ENCODE measurements at regions of chrX and their contacts with region 1.

Region 1: GRCh38 chrX:149962859-149963757 is 24.8 kb upstream of the EOLA2 start:
- DNase-seq: peak; percentile 80
- H3K4me3 ChIP-seq: no peak overlapping the region
- H3K27ac ChIP-seq: no peak overlapping the region
- H3K4me1 ChIP-seq: 0 out of 2 replicates have a peak, but pooled peaks cover 4% of the 10 kb centered on the region
- H3K27me3 ChIP-seq: no peaks in the 10 kb centered on the region

Region 2: DNA sequence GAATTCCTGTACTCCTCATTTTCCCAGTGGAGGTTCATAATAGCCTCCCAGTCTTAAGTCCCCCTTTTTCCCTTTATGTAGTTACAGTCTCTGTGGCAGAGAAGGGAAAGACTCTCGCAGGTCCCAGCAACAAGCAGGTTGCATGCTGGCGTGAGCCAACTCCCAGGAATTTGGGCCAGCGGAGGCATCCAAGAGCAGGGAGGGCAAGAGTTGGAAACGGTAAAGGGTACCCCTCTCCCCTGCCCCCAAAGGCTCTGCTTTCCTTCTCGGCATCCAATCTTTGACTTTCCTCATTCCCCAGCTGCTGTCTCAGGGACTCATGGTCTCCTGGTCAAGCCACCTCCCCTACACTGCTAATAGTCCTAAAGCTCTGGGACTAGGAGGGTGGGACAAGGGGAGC is 352.6 kb before region 1 on chrX:
- in situ Hi-C with region 1: no loop called
- DNase-seq: no peak
- H3K4me3 ChIP-seq: no peak overlapping the region
- H3K27ac ChIP-seq: no peak overlapping the region
- H3K4me1 ChIP-seq: no peaks in the 10 kb centered on the region
- H3K27me3 ChIP-seq: no peaks in the 10 kb centered on the region

Region 3: GRCh38 chrX:149715468-149715867 is 247.6 kb before region 1 on chrX:
- in situ Hi-C with region 1: no loop called
- DNase-seq: no peak
- H3K4me3 ChIP-seq: no peak overlapping the region
- H3K27ac ChIP-seq: no peak overlapping the region
- H3K4me1 ChIP-seq: no peaks in the 10 kb centered on the region
- H3K27me3 ChIP-seq: no peaks in the 10 kb centered on the region

Region 4: DNA sequence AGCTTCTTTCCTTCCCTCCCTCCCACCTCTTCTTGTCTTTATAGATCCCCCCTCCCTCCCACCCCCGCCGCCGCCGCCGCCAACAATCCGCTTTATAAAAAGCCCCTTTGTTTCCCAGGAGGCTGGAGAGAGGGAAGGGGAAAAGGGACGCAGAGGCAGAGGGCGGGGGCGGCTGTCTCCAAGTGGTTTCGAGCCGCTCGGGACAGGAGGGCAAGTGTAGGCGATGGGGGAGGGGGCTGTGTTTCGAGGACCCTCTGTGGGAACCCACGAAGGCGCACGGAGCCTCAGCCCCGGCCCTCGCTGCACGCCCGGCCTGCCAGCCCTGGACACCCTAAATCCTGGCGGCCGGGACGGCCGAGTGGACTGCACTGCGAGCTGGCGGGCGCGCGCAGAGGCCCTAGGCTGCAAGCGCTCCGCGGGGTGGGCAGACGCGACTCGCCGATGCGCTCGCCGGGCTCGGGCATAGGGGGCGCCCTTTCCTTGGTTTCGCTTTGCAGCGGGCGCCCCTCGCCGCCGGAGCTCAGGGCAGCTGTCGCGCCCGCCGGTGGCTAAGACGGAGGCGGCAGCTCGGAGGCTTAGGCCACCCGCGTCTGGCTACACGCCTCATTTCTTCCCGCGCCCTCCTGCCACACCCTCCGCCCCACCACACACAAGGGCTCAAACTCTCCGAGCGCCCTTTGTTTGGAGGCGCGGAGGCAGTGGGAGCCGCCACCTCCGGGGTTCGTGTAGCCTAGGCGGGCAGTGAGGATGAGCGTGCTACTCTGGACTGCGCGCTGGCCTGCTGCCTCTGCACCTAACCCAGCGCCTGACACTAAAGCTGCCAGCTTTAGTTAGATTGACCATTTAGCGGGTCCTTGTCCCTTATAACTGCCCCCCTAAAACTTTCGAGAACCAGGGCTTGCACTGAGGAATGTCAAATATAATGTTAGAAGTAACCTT is 402.2 kb after region 1 on chrX:
- in situ Hi-C with region 1: loop called (anchors 25 kb)
- DNase-seq: peak; percentile 77
- H3K4me3 ChIP-seq: peak overlapping the region; percentile 89
- H3K27ac ChIP-seq: peak overlapping the region; percentile 90
- H3K4me1 ChIP-seq: no peaks in the 10 kb centered on the region; the same call in 1 of the 2 replicates
- H3K27me3 ChIP-seq: no peaks in the 10 kb centered on the region

Region 5: DNA sequence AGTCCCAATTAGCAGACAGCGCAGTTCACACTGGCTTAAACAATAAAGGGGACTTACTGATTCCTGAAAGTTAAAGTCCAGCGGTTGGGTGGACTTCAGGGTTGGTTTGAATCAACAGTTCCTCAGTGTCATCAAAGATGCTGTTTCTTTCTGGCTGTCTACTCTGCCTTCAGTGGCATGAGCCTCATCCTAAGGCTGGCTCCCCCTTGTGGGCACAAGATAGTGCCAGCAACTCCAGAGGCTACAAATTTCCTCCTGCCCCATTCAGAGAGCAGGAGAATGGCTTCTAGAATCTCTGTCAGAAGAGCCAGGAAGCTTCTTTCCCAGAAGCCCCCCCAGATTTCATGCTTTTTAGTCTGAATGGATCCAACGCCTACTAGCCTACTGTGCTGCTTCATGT is 522.9 kb after region 1 on chrX:
- in situ Hi-C with region 1: loop called (anchors 25 kb)
- DNase-seq: peak; percentile 74
- H3K4me3 ChIP-seq: no peak overlapping the region
- H3K27ac ChIP-seq: no peak overlapping the region
- H3K4me1 ChIP-seq: peaks cover 8% of the 10 kb centered on the region; the same call in 1 of the 2 replicates
- H3K27me3 ChIP-seq: no peaks in the 10 kb centered on the region

Region 6: DNA sequence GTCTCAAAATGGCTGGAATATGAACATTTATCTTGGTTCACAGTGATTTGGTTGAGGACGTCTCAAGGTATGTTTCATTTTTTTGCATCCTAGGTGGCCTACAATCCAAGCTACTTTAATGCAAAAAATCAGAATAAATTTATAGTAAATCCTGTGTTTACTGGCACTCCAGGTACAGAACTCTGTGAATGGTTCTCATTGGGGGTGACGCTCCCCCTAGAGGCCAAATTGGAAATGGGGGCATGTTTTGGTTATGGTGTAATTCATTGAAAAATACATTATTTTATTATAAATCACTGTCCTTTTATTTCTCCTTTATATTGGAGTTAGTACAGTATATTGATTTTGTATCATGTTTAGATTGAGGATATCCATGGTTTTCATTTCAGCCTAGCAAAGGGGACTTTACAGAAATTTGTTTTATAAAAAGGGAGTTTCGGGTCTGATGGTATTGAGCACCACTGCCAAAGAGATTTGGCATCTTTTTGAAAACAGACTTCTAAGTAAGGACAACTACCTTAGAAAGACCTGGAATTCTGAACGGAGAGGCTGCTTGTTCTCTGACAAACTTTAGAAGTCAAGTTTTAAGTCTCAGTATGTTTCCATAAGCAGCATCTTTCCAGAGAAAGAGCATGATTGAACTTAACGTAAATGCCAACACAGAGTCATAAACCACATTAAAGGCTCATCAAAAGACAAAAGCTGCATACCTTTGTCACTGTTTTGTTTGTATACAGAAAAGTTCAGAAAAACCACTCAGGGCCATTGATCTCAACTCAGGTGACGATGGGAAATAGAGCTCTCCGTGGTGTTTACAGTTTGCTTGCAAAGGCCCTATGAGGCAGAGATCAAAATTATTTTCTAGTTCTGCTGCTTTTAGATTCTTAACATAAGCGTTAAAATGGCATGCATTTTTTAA is 624.7 kb after region 1 on chrX:
- in situ Hi-C with region 1: loop called (anchors 25 kb)
- DNase-seq: peak; percentile 25
- H3K4me3 ChIP-seq: no peak overlapping the region
- H3K27ac ChIP-seq: no peak overlapping the region
- H3K4me1 ChIP-seq: no peaks in the 10 kb centered on the region
- H3K27me3 ChIP-seq: no peaks in the 10 kb centered on the region

Region 7: GRCh38 chrX:150704030-150704613 is 741.0 kb after region 1 on chrX:
- in situ Hi-C with region 1: loop called (anchors 25 kb)
- DNase-seq: peak; percentile 81
- H3K4me3 ChIP-seq: no peak overlapping the region
- H3K27ac ChIP-seq: peak overlapping the region; percentile 92
- H3K4me1 ChIP-seq: peaks cover 21% of the 10 kb centered on the region
- H3K27me3 ChIP-seq: no peaks in the 10 kb centered on the region